ENCODE measurements at regions of chr7 and their contacts with region 1.

Region 1: GRCh38 chr7:128387216-128388144 is 22.3 kb downstream of the IMPDH1 start:
- DNase-seq: peak; percentile 71
- H3K4me3 Mint-ChIP-seq: no peak overlapping the region
- H3K27ac Mint-ChIP-seq: no peak overlapping the region
- H3K4me1 Mint-ChIP-seq: peaks cover 2% of the 10 kb centered on the region
- H3K27me3 Mint-ChIP-seq: no peaks in the 10 kb centered on the region

Region 2: GRCh38 chr7:128347647-128348097 is 39.8 kb before region 1 on chr7:
- CTCF ChIA-PET with region 1: interaction called, 34 read pairs
- POLR2A ChIA-PET with region 1: no interaction called
- DNase-seq: peak; percentile 60
- H3K4me3 Mint-ChIP-seq: no peak overlapping the region
- H3K27ac Mint-ChIP-seq: no peak overlapping the region
- H3K4me1 Mint-ChIP-seq: peaks cover 9% of the 10 kb centered on the region
- H3K27me3 Mint-ChIP-seq: peaks cover 22% of the 10 kb centered on the region

Region 3: GRCh38 chr7:128373606-128374005 is 13.9 kb before region 1 on chr7:
- CTCF ChIA-PET with region 1: interaction called, 13 read pairs
- POLR2A ChIA-PET with region 1: no interaction called
- DNase-seq: no peak
- H3K4me3 Mint-ChIP-seq: no peak overlapping the region
- H3K27ac Mint-ChIP-seq: no peak overlapping the region
- H3K4me1 Mint-ChIP-seq: no peaks in the 10 kb centered on the region
- H3K27me3 Mint-ChIP-seq: peaks cover 13% of the 10 kb centered on the region

Measured in activated CD4-positive, alpha-beta T cell treated with anti-CD3 and anti-CD28 coated beads, Interleukin-2, amount 10 ng/mL, durations not matched to agents 7 days and 5 days (primary cell).